ENCODE measurements at regions of chr5 and their contacts with region 1.

Region 1: GRCh38 chr5:103258368-103258956 is at the start of gene MACIR:
- DNase-seq: peak; percentile 84
- ATAC-seq: peak; percentile 94
- H3K4me3 Mint-ChIP-seq: peak within 1 kb of the TSS; percentile 88
- H3K27ac Mint-ChIP-seq: peak within 1 kb of the TSS; percentile 84
- H3K4me1 Mint-ChIP-seq: peaks cover 19% of the 10 kb centered on the region
- H3K27me3 Mint-ChIP-seq: peaks cover 2% of the 10 kb centered on the region
- CTCF ChIP-seq: no peak
- total RNA-seq, gene MACIR: 3.9 and 5.1 TPM in 2 replicates

Region 2: GRCh38 chr5:103119765-103120606 is 138.5 kb before region 1 on chr5 and contains the starts of genes GIN1 and PPIP5K2:
- CTCF ChIA-PET with region 1: no interaction called
- POLR2A ChIA-PET with region 1: interaction called, 41 read pairs
- intact Hi-C with region 1: loop called (anchors 1 kb)
- DNase-seq: peak; percentile 96
- ATAC-seq: peak; percentile 87
- H3K4me3 Mint-ChIP-seq: peak within 1 kb of the TSS; percentile 98
- H3K27ac Mint-ChIP-seq: peak within 1 kb of the TSS; percentile 99
- H3K4me1 Mint-ChIP-seq: peaks cover 35% of the 10 kb centered on the region
- H3K27me3 Mint-ChIP-seq: no peaks in the 10 kb centered on the region
- CTCF ChIP-seq: no peak
- total RNA-seq, gene GIN1: 9.1 and 12.6 TPM in 2 replicates
- total RNA-seq, gene PPIP5K2: 60.7 and 76.1 TPM in 2 replicates

Region 3: DNA sequence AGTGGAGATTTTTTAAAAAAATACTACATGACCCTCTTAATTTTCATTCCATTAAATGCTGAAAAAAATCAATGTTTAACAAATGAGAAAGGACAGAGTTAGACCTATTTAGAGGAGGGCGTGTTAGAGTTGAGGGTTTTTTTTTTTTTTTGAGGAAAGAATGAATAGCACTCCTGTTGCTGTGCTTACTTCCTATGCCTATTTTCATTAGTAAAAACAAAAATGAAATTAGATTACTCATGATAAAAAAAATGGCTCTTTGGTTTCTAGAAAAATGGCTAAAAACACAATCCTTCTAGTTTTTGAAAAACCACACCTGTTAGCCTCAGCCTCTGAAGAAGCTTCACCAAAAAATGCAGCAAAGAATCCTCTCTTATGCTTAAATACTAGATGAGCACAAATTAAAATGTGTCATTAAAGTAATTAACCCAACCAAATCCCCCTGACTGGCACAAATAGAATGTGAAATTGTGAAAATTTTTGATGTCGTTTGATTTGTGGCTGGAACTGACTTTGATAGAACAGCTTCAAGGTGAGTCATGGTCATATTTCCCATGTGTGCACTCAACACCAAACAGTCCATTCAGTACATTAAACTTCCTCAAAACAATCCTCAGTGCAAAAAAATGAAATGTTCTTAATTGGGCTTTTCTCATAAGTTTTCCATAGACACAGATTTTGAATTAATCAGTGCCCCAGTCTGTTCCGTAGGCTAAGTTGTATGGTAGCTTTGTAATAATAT is 98.1 kb after region 1 on chr5:
- CTCF ChIA-PET with region 1: no interaction called
- POLR2A ChIA-PET with region 1: no interaction called
- intact Hi-C with region 1: no loop called
- DNase-seq: no peak
- ATAC-seq: no peak
- H3K4me3 Mint-ChIP-seq: no peak overlapping the region
- H3K27ac Mint-ChIP-seq: no peak overlapping the region
- H3K4me1 Mint-ChIP-seq: no peaks in the 10 kb centered on the region
- H3K27me3 Mint-ChIP-seq: no peaks in the 10 kb centered on the region
- CTCF ChIP-seq: no peak

Region 4: GRCh38 chr5:103562453-103563157 is 304.1 kb after region 1 on chr5 and contains the start of gene NUDT12:
- CTCF ChIA-PET with region 1: no interaction called
- POLR2A ChIA-PET with region 1: interaction called, 6 read pairs
- intact Hi-C with region 1: loop called (anchors 2 kb)
- DNase-seq: peak; percentile 45
- ATAC-seq: peak; percentile 93
- H3K4me3 Mint-ChIP-seq: peak within 1 kb of the TSS; percentile 92
- H3K27ac Mint-ChIP-seq: peak within 1 kb of the TSS; percentile 73
- H3K4me1 Mint-ChIP-seq: peaks cover 11% of the 10 kb centered on the region
- H3K27me3 Mint-ChIP-seq: no peaks in the 10 kb centered on the region
- CTCF ChIP-seq: no peak
- total RNA-seq, gene NUDT12: 2.6 and 3.5 TPM in 2 replicates

Measured in activated B cell treated with CpG ODN at 0.5 μM for 24 hours (primary cell).